Endothelial cell of umbilical vein (primary cell): ENCODE measurements at regions of chr3 and their contacts with region 1.

Region 1: GRCh38 chr3:52291508-52292181 is 4.0 kb downstream of the GLYCTK start:
- DNase-seq: no peak
- H3K4me3 ChIP-seq: no peak overlapping the region
- H3K27ac ChIP-seq: no peak overlapping the region
- H3K4me1 ChIP-seq: peaks cover 10% of the 10 kb centered on the region
- H3K27me3 ChIP-seq: no peaks in the 10 kb centered on the region
- CTCF ChIP-seq: peak; percentile 47 to 63
- POLR2A ChIP-seq: no peak

Region 2: GRCh38 chr3:51799879-51800749 is 491.5 kb before region 1 on chr3:
- CTCF ChIA-PET with region 1: no interaction called
- POLR2A ChIA-PET with region 1: no interaction called
- dilution Hi-C with region 1: no loop called
- intact Hi-C with region 1: no loop called
- DNase-seq: peak; percentile 74
- H3K4me3 ChIP-seq: no peak overlapping the region
- H3K27ac ChIP-seq: no peak overlapping the region
- H3K4me1 ChIP-seq: no peaks in the 10 kb centered on the region
- H3K27me3 ChIP-seq: peaks cover 20 to 29% of the 10 kb centered on the region in 2 experiments
- CTCF ChIP-seq: peak; percentile 64 to 65
- POLR2A ChIP-seq: no peak

Region 3: GRCh38 chr3:52039846-52040245 is 251.8 kb before region 1 on chr3:
- CTCF ChIA-PET with region 1: no interaction called
- POLR2A ChIA-PET with region 1: no interaction called
- dilution Hi-C with region 1: no loop called
- intact Hi-C with region 1: no loop called
- DNase-seq: no peak
- H3K4me3 ChIP-seq: no peak overlapping the region
- H3K27ac ChIP-seq: no peak overlapping the region
- H3K4me1 ChIP-seq: no peaks in the 10 kb centered on the region
- H3K27me3 ChIP-seq: no peaks in the 10 kb centered on the region
- CTCF ChIP-seq: no peak
- POLR2A ChIP-seq: no peak

Region 4: GRCh38 chr3:52231502-52232293 is 59.9 kb before region 1 on chr3:
- CTCF ChIA-PET with region 1: interaction called, 16 read pairs
- POLR2A ChIA-PET with region 1: no interaction called
- dilution Hi-C with region 1: no loop called
- intact Hi-C with region 1: no loop called
- DNase-seq: peak; percentile 54
- H3K4me3 ChIP-seq: no peak overlapping the region
- H3K27ac ChIP-seq: no peak overlapping the region
- H3K4me1 ChIP-seq: no peaks in the 10 kb centered on the region
- H3K27me3 ChIP-seq: no peaks in the 10 kb centered on the region
- CTCF ChIP-seq: peak; percentile 98
- POLR2A ChIP-seq: peak; percentile 36

Region 5: DNA sequence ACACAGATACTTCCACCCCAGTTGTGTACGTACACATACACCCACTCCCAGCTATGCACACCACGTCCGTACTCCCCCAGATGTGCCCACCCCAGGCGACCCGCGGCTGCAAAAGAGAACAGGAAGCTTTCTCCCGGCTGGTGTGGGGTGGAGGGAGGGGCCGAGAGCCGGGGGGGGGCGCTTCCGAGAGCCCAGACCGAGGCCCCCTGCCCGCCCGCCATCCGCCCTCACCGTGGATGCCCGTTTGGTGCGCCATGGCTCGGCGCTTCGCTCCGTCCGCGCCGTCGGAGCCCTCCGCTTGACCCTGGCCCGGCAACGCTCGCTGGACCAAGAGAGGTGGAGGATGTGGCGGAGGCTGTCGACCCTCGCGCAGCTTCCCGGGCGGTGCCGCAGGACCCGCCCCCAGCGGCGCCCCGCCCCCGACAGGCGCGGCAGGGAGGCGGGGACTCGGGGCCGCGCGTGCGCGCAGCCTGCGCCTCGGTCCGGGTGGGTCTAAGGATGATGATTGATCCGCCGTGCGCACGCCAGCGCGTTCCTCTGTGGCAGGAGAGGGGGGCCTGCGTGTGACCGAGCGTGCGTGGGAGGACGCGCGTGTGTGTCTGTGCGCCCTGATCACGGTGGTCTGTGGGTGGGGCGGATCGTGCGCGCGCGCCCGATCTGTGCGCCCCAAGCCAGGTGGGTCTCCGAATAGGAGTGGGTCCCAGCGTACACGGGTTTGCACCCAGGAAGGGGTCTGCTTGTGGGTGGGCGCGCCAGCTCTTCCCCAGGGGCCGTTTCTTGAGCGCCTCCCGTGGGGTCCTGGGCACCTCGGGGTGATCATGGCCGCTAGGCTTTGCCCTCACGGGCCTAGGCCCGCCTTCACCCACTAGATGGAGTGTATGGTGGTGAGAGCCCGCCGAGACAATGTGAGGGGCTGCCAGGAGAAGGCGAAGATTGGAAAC is 52.6 kb before region 1 on chr3 and contains the start of gene TWF2:
- CTCF ChIA-PET with region 1: interaction called, 3 read pairs
- POLR2A ChIA-PET with region 1: interaction called, 4 read pairs
- dilution Hi-C with region 1: no loop called
- intact Hi-C with region 1: loop called (anchors 2 kb)
- DNase-seq: peak; percentile 82
- H3K4me3 ChIP-seq: peak within 1 kb of the TSS; percentile 20 to 98 (median 66)
- H3K27ac ChIP-seq: peak within 1 kb of the TSS; percentile 80
- H3K4me1 ChIP-seq: peaks cover 23% of the 10 kb centered on the region
- H3K27me3 ChIP-seq: no peaks in the 10 kb centered on the region
- CTCF ChIP-seq: peak; percentile 36 to 62
- POLR2A ChIP-seq: peak; percentile 87
- total RNA-seq, gene TWF2: 82.6 and 82.9 TPM in 2 replicates

Region 6: DNA sequence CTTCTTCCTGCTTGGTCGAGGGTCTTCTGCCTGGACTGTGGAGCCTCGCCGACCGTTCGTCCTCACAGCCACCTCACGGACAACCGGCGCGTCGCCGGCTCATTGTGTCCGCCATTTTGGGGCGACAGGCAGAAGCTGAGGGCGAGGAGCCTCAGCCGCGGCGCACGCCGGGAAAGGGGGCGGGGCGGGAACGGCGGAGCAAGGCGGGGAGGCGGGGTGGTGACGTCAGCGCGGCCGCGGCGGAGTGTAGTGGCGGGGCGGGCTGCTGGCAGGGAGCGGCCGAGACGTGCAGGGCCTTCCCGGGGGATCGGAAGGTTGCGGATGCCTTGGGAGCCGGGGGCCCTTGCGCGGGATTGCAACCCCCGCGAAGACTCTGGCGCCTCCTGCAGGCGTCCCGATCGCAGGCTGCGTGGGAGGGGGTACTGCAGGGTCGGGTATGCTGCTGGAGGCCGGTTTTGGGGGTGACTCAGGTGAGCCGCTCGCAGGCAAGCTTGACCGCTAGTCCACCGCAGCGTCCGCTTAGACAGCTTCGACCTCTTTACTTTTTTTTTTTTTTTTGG is 13.1 kb before region 1 on chr3 and contains the start of gene WDR82:
- CTCF ChIA-PET with region 1: interaction called, 8 read pairs
- POLR2A ChIA-PET with region 1: interaction called, 9 read pairs
- dilution Hi-C with region 1: no loop called
- intact Hi-C with region 1: loop called (anchors 1 kb)
- DNase-seq: peak; percentile 94
- H3K4me3 ChIP-seq: peak within 1 kb of the TSS; percentile 53 to 96 (median 87)
- H3K27ac ChIP-seq: peak within 1 kb of the TSS; percentile 62
- H3K4me1 ChIP-seq: peaks cover 34% of the 10 kb centered on the region
- H3K27me3 ChIP-seq: no peaks in the 10 kb centered on the region
- CTCF ChIP-seq: peak; percentile 35 to 57
- POLR2A ChIP-seq: peak; percentile 95
- total RNA-seq, gene WDR82: 71.3 and 71.8 TPM in 2 replicates

Region 7: DNA sequence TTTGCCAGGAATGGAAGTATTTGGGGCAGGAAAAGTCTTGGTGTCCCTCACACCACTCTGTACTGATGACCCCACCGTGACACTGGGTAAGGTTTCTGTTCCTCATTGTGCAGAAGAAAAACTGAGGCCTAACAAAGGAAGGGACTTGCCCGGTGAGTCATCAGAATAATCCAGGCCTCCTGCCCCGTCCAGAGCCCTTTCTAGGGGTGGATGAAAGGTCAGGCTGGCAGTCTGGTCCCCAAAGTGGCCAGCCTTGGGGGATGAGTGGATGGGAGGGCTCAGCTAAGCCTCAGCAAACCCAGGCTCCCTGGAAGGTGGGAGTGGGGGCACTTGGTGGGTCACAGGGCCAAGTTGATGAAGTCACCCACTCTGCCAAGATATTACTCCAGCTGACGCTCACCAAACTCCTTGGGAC is 22.1 kb after region 1 on chr3:
- CTCF ChIA-PET with region 1: no interaction called
- POLR2A ChIA-PET with region 1: no interaction called
- dilution Hi-C with region 1: no loop called
- intact Hi-C with region 1: loop called (anchors 1 kb)
- DNase-seq: peak; percentile 78
- H3K4me3 ChIP-seq: no peak overlapping the region
- H3K27ac ChIP-seq: peak overlapping the region; percentile 54
- H3K4me1 ChIP-seq: peaks cover 19% of the 10 kb centered on the region
- H3K27me3 ChIP-seq: no peaks in the 10 kb centered on the region
- CTCF ChIP-seq: no peak
- POLR2A ChIP-seq: no peak

Region 8: DNA sequence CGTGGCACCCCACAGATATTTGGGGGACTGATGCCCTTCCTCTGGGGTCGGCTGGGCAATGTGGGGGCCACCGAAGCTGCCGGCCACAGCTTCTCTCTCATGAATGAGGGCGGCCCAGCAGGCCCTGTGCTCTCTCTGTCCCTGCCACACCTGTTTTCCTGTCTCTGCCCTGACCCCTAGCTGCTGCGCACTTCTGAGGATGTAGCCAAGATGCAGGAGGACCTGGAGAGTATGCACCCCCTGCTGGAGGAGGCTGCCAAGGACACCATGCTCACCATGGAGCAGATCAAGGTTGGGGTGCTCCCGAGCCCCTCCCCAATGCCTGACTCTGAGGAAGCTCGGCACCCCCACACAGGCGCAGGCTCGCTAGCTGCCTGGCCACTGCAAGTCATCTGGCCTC is 93.5 kb after region 1 on chr3:
- CTCF ChIA-PET with region 1: interaction called, 4 read pairs
- POLR2A ChIA-PET with region 1: no interaction called
- dilution Hi-C with region 1: no loop called
- intact Hi-C with region 1: loop called (anchors 1 kb)
- DNase-seq: peak; percentile 26
- H3K4me3 ChIP-seq: no peak overlapping the region
- H3K27ac ChIP-seq: no peak overlapping the region
- H3K4me1 ChIP-seq: no peaks in the 10 kb centered on the region
- H3K27me3 ChIP-seq: no peaks in the 10 kb centered on the region
- CTCF ChIP-seq: peak; percentile 50 to 64
- POLR2A ChIP-seq: no peak